ENCODE measurements at regions of chr19 and their contacts with region 1.

Region 1: GRCh38 chr19:55503502-55504251 is 15.4 kb downstream of the SSC5D start:
- DNase-seq: no peak
- H3K4me3 ChIP-seq: peak overlapping the region; percentile 63
- CTCF ChIP-seq: peak; percentile 99

Region 2: GRCh38 chr19:55146078-55146704 is 357.5 kb before region 1 on chr19:
- CTCF ChIA-PET with region 1: interaction called, 69 read pairs
- POLR2A ChIA-PET with region 1: no interaction called
- DNase-seq: no peak
- H3K4me3 ChIP-seq: peak overlapping the region; percentile 15
- CTCF ChIP-seq: peak; percentile 60

Region 3: DNA sequence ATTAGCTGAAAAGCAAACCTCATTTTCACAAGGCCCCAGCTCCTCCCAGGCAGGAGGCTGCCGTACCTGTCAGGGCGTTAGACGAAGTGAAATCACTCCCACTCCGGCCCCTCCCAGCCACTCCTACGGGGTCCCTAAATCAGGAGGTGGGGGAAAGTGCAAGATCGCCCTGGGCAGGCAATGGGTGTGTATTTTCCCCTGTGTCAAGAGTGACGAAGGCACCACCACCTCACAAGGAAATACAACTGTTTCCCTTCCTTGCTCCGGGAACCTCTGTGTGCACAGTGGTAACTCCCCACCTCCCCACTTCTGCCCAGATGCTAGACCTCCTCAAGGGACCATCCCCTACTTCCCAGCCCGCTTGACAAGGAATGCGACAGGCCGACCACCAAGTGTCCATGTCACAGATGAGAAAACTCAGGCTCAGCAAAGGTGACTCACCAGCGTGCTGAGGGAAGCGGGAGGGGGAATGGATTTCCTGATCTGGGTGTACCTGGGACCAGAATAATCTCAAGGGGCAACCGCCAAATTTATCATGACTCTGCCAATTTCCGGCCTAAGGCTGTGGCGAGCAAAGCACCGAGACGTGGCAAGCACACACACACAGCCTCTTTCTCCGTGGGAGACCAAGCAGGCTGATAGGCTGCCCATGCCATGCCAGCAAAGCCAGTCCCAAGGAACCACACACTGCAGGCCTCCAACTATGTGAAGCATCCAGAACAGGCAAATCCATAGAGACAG is 252.2 kb before region 1 on chr19:
- CTCF ChIA-PET with region 1: no interaction called
- POLR2A ChIA-PET with region 1: no interaction called
- DNase-seq: no peak
- H3K4me3 ChIP-seq: no peak overlapping the region
- CTCF ChIP-seq: no peak

Region 4: DNA sequence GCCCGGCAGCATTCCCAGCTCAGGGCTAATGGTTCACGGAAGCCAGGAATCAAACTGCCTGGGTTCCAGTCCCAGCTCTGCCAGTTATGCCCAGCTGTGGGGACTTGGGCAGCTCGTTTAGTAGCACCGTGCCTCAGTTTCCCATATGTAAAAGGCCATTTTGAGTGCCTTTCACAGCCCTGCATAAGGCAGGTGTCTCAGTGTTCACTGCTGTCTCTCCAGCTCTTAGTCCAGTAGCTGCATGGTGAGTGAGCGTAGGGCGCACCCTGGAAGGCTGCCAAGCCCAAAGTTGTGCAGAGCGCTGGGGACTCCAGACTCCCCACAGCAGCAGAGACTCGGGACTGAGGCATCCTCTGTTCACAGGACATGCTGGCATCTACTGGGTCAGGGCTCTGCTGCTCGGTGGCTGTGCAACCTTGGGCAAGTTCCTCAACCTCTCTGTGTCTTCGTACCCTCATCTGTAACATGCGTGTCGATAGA is 112.4 kb before region 1 on chr19:
- CTCF ChIA-PET with region 1: interaction called, 10 read pairs
- POLR2A ChIA-PET with region 1: no interaction called
- DNase-seq: no peak
- H3K4me3 ChIP-seq: no peak overlapping the region
- CTCF ChIP-seq: no peak

Region 5: GRCh38 chr19:55443060-55443823 is 60.4 kb before region 1 on chr19 and contains the start of gene SHISA7:
- CTCF ChIA-PET with region 1: no interaction called
- POLR2A ChIA-PET with region 1: no interaction called
- DNase-seq: no peak
- H3K4me3 ChIP-seq: no peak within 1 kb of the TSS
- CTCF ChIP-seq: no peak

Region 6: DNA sequence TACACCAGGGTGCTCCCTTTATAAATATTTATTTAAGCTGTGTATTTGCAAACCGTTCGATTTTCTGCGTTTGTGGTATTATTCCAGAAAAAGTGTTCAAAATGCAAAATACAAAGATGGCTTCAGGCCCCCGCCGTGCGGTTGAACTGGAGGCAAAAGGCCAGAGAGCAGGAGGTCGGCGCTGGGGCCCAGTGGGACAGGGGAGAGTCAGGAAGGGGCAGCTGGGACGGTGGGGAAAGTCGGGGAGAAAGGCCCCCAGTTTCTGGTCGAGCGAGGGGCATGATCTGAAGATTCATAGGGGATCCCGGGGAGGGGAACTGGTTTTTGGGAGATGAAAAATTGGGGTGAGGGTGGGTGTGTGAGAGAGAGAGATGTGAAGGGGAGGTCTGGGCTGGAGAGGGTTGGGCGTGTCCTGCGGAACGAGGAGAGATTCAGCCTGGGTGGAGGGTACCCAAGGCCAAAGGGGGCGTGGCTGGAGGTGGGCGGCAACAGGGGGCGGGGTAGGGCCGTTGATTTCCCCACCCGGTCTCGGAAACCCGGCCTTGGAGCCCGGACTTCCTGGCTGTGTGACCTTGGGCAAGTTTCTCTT is 42.9 kb before region 1 on chr19:
- CTCF ChIA-PET with region 1: interaction called, 241 read pairs
- POLR2A ChIA-PET with region 1: interaction called, 3 read pairs
- DNase-seq: no peak
- H3K4me3 ChIP-seq: peak overlapping the region; percentile 98
- CTCF ChIP-seq: no peak

Region 7: GRCh38 chr19:55484593-55485438 is 18.9 kb before region 1 on chr19 and contains the start of gene NAT14:
- CTCF ChIA-PET with region 1: interaction called, 163 read pairs
- POLR2A ChIA-PET with region 1: interaction called, 11 read pairs
- DNase-seq: no peak
- H3K4me3 ChIP-seq: peak within 1 kb of the TSS; percentile 76
- CTCF ChIP-seq: no peak

Region 8: DNA sequence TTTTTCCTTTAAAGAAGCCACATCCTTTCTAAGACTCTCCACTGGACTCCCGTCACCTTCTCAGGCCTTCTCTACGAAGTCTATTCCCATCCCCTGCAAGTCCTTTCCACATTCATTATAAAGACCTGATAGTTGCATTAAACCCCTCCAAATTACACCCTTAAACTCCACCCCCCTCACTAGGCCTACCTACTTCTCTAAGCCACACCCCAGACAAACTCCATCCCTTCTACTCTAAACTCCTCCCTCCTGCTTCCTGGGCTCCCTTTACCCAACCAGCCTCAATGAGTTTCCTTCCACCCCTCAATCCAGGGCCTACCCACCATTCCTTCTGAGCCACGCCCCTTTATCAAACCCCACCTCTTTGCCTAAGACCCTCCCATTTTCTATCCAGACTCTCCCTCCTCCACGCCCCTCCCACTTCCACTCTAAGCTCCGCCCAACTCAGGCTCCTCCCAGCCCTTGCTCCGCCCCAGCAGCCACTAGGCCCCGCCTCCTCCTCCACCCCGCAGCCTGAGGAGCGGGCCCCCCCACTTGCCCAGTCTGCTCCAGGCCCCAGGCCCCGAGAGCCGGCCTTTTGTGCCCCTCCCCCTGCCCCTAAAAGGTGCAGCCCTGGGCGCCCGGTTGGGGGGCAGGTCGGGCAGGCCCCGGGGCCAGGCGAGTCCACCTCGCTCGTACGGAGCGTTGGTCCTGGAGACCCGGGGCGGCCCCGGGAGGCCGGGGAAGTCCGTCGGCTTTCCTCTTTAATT is 95.2 kb after region 1 on chr19:
- CTCF ChIA-PET with region 1: no interaction called
- POLR2A ChIA-PET with region 1: no interaction called
- DNase-seq: peak; percentile 74
- H3K4me3 ChIP-seq: peak overlapping the region; percentile 87
- CTCF ChIP-seq: no peak

Region 9: DNA sequence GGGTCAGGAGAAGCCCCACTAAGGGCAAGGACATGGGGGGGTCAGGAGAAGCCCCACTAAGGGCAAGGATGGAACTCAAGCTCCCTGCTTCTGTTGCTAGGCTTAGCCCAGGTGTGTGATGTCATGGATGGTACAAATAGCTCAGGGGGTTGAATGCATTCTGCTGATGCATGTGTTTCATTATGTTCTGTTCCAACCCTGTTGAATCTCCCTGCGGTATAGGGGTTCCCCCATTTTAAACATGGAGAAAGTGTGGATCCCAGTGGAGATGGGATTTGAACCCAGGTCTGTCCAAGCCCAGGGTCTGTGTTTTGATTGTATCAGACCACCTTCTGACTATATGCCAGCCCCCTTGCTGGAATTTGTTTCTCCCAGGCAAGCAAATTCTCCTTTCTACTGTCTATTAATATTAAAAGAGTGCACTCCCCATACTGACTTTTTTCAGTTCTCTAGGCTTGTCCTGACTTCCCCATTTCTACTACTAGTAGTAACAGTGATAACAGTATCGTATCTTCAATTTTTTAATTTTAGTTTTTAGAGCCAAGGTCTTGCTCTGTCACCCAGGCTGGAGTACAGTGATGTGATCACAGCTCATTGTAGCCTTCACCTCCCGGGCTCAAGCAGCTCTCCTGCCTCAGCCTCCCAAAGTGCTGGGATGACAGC is 108.4 kb after region 1 on chr19:
- CTCF ChIA-PET with region 1: interaction called, 70 read pairs
- POLR2A ChIA-PET with region 1: no interaction called
- DNase-seq: no peak
- H3K4me3 ChIP-seq: no peak overlapping the region
- CTCF ChIP-seq: no peak

Region 10: GRCh38 chr19:56066152-56067023 is 562.7 kb after region 1 on chr19:
- CTCF ChIA-PET with region 1: no interaction called
- POLR2A ChIA-PET with region 1: no interaction called
- DNase-seq: no peak
- H3K4me3 ChIP-seq: peak overlapping the region; percentile 36
- CTCF ChIP-seq: peak; percentile 93

Measured in AG04449 (cell line).